ENCODE measurements at regions of chr20 and their contacts with region 1.

Region 1: DNA sequence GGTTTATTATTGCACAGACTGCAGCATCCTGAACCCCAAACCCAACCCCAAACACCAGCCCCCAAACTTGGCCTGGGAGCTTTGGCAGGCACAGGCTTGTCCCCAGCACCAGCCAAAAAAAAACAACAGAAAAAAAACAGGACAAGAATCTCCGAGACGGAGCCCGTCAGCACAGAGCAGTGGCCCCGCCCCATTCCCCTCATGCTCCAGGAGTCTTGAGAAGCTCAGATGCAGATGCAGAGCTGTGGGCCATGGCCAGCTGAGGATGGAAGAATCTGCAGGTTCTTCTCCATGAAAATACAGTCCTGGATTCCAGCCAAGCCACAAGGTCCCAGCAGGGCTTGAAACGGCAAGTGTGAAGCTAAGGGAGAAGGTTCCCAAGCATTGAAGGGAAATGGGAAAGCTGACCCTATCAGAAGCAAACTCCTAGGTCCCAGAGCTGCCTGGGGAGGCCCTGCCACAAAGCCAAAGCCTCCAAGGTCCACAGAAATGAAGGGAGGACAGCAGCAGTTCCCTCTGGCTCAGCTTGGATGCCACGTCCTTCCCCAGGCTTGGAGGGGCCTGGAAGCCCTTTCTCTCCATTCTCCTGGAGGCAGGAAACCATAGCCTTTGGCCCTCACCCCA is 75.2 kb downstream of the JPH2 start:
- DNase-seq: no peak
- CTCF ChIP-seq: no peak

Region 2: DNA sequence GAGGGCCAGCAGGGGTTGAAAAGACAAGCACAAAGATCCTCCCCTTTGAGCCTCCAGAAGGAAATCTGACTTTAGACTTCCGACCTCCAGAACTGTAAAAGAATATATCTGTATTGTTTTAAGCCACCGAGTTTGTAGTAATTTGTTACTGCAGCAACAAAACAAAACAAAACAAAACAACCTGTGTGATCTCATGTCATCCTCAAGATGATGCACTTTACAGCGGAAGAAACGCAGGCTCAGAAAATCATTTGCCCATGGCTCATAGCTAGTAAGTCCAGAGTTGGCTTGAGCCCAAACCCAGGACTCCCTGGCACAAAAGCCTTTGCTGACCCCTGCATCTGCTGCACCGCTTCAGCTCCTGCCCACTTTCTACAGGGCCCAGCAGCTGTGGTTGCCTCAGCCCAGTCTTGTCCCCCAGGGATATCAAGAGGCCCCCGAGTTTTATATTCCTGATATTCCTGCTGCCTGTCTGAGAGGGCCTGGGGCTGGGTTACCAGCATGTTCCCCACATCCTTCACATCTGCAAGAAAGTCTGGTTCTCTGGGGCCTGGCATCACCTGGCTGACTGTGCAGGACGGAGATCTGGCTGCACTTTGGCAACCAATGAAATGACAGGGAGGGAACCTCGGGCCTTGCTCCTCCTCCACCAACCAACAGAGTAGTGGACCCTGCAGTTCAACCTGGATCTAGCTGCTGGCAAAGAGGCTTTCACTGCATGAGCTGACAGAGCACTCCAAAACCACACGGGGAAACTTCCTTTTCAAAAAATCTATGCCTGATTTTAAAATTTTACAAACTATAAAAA is 18.3 kb after region 1 on chr20:
- CTCF ChIA-PET with region 1: interaction called, 14 read pairs
- POLR2A ChIA-PET with region 1: no interaction called
- DNase-seq: no peak
- CTCF ChIP-seq: no peak

Region 3: GRCh38 chr20:44137210-44137801 is 25.5 kb after region 1 on chr20:
- CTCF ChIA-PET with region 1: interaction called, 12 read pairs
- POLR2A ChIA-PET with region 1: no interaction called
- DNase-seq: no peak
- CTCF ChIP-seq: no peak

Region 4: GRCh38 chr20:44176833-44177534 is 65.2 kb after region 1 on chr20:
- CTCF ChIA-PET with region 1: interaction called, 10 read pairs
- POLR2A ChIA-PET with region 1: no interaction called
- DNase-seq: no peak
- CTCF ChIP-seq: no peak

Region 5: GRCh38 chr20:44187051-44187762 is 75.4 kb after region 1 on chr20 and contains the start of gene JPH2:
- CTCF ChIA-PET with region 1: interaction called, 205 read pairs
- POLR2A ChIA-PET with region 1: no interaction called
- DNase-seq: no peak
- CTCF ChIP-seq: no peak

Region 6: DNA sequence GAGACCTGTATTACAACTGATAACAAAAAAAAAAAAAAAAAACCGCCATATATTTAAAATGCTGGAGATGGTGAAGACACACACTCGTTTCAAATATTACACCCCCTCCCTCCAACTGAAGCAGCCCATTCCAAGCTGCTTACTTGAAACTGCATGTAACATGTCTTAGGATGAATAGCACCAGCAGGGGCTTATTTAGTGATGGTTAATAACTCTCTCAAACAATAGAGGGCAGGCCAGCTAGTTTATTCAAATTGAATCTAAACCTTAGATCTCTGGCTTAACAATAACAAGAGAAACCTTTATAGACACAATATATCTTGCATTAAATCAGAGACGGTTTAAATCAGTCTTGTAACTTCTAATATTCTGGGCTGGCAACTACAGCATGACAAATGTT is 84.4 kb after region 1 on chr20:
- CTCF ChIA-PET with region 1: interaction called, 205 read pairs
- POLR2A ChIA-PET with region 1: no interaction called
- DNase-seq: no peak
- CTCF ChIP-seq: no peak

Region 7: GRCh38 chr20:44310664-44311639 is 199.1 kb after region 1 on chr20 and contains the start of gene FITM2:
- CTCF ChIA-PET with region 1: interaction called, 12 read pairs
- POLR2A ChIA-PET with region 1: no interaction called
- DNase-seq: peak; percentile 100
- CTCF ChIP-seq: peak; percentile 98

Measured in GM10248 (cell line).